Right cardiac atrium (tissue), 5 donors: ENCODE measurements at regions of chr12 and their contacts with region 1.

Region 1: DNA sequence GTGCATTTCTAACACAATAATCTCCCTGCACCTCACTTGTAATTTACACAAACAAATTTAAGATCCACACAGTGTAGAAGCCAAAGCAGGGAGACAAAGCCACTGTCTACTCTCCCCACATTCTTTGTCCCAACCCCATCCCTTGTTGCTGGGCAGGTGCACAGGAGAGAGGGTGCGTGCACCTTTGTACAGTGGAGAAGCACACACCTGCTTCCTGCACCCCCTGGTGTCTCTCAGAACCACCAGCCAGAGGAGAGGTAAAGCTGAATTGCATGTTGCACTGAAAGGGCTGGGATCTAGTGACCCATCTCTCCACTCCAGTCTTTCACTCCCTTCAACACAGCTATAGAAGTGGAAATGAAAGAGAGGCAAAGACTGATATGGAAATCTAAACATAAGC is 51.4 kb upstream of the IFNG-AS1 start:
- DNase-seq: no peak
- ATAC-seq: no peak
- H3K4me3 ChIP-seq: no peak overlapping the region
- H3K27ac ChIP-seq: no peak overlapping the region
- H3K4me1 ChIP-seq: no peaks in the 10 kb centered on the region
- H3K27me3 ChIP-seq: no peaks in the 10 kb centered on the region

Region 2: DNA sequence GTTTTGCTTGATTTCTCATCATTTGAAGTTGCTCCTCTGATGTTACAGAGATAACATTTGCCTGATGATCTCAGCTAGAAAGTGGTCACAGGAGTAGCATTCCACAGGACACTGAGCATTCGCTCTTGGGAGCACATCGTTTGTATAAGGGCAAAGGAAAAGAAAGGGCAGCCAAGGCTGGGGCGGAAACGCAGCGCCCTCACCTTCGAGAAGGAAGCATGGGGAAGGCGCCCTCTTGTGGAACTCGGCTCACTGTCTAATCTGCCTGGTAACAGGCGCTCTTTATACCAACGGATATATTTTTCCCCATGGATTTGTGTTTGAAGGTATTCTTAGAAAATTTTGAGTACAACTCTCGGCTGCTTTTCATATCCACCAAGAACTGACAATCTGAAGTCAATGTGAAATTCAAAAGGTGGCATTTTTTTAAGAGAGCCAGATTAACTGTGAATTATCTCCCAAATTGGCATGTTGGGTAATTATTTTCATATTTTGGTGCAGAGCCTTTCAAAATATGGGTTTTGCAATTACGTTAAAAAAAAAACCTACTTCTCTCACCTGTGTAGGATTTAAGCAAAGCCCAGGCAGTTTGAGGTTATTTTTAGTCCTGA is 496.0 kb before region 1 on chr12:
- intact Hi-C with region 1: loop called in 3 of 4 experiments (anchors 10 kb)
- DNase-seq: peak; percentile 91 to 96 (median 93)
- ATAC-seq: peak; percentile 91 to 97
- H3K4me3 ChIP-seq: peak overlapping the region; percentile 27
- H3K27ac ChIP-seq: no peak overlapping the region
- H3K4me1 ChIP-seq: peaks cover 4% of the 10 kb centered on the region
- H3K27me3 ChIP-seq: no peaks in the 10 kb centered on the region